ENCODE measurements at regions of chr7 and their contacts with region 1.

Region 1: DNA sequence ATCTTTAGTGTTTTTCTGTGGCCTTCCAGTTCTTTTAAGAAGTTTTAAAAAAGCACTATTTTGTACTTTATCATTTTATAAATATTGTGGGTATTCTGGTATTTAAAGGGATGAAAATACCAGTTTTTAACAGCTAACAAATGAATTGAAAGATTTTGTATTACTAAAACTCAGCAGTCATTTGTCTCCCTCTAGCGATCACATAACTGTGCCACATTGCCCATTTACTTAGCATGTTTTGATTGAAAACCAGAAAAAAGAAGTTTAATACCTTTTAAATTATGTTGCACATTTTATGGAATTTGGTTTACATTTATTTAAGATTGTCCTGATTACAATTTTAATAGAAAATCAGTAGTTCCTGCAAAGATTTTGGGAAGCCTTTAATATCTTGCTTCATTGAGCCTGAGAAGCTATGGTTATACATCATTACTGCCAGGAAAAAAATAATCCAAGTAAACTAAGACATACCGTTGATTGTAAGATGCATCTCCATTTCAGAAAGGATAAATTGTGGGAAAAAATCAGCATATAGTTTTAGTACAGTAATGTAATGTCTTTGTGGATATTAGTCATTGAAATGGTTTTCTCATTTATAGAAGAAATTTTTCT is 34.9 kb downstream of the TAX1BP1 start:
- DNase-seq: peak; percentile 59
- H3K4me3 ChIP-seq: no peak overlapping the region
- H3K27ac ChIP-seq: no peak overlapping the region
- H3K4me1 ChIP-seq: no peaks in the 10 kb centered on the region
- H3K27me3 ChIP-seq: no peaks in the 10 kb centered on the region
- CTCF ChIP-seq: peak; percentile 45 to 46
- POLR2A ChIP-seq: no peak

Region 2: GRCh38 chr7:27210441-27211083 is 564.3 kb before region 1 on chr7:
- CTCF ChIA-PET with region 1: interaction called, 24 read pairs
- POLR2A ChIA-PET with region 1: no interaction called
- dilution Hi-C with region 1: no loop called
- intact Hi-C with region 1: no loop called
- DNase-seq: no peak
- H3K4me3 ChIP-seq: peak overlapping the region in 1 of 3 experiments; percentile 29
- H3K27ac ChIP-seq: no peak overlapping the region
- H3K4me1 ChIP-seq: peaks cover 15% of the 10 kb centered on the region
- H3K27me3 ChIP-seq: peaks cover 73 to 77% of the 10 kb centered on the region in 2 experiments
- CTCF ChIP-seq: peak; percentile 56 to 82
- POLR2A ChIP-seq: no peak

Region 3: DNA sequence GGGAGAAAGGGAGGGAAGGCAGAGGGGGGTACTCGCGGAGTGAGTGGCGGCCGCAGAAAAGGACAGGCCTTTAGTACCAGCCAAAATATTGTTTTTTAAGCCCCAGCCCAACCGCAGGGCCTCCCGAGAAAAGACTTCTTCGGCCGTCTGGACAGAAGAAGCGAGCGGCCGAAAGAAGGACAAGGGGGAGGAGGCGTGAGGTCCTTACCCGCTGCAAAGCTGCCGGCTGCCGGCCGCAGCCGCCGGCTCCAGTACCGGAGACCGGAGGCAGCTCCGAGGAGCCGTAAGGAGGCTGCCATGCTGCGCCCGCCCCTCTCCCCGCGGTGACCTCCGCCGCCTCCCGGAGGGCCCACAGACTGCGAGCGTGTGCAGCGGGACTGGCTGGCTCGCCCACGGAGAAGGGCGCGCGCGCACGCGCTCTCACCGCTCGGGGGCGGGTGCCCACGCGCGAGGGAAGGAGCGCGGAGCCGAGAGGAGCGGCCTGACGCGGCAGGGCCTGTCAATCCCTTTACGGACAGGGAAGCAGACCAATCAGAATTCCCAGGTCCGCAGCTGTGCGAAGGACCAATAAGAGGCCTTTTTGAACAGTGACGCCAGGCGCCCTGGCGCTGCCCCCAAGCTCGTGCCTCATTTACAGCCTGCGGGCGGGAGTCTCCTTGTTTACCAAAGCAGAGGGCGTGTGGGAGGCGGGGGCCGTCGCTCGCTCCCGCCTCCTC is 112.2 kb before region 1 on chr7 and contains the start of gene HIBADH:
- CTCF ChIA-PET with region 1: interaction called, 11 read pairs
- POLR2A ChIA-PET with region 1: no interaction called
- dilution Hi-C with region 1: no loop called
- intact Hi-C with region 1: no loop called
- DNase-seq: peak; percentile 99
- H3K4me3 ChIP-seq: peak within 1 kb of the TSS; percentile 63 to 83 (median 69)
- H3K27ac ChIP-seq: peak within 1 kb of the TSS; percentile 74
- H3K4me1 ChIP-seq: peaks cover 7% of the 10 kb centered on the region
- H3K27me3 ChIP-seq: no peaks in the 10 kb centered on the region
- CTCF ChIP-seq: no peak
- POLR2A ChIP-seq: peak; percentile 70
- total RNA-seq, gene HIBADH: 19.7 and 22.6 TPM in 2 replicates

Region 4: DNA sequence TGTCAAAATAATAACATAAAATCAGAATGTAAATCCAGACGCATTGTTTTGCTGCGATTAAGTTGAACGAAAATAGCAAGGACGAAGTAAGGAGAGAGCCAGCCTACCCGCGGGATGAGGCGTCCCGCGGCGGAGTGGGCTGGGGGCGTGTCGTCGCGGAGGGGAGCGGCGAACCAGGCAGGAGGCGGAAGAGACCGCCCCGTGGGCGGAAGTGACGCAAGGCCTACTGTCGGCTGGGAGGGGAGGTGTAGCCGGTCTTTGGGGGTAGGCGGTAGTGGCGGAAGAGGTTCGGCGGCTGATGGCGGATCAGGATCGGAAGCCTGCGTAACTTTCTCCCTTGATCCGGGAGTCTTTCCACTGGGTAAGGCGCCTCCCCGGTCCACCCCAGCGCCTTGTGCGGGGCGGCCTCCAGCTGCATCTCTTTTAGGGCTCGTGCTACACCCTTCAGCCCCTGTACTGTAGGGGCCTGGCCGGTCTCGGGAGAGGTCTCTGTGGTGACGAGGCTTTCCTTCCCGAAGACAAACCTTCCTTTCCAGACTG is 34.8 kb before region 1 on chr7 and contains the start of gene TAX1BP1:
- CTCF ChIA-PET with region 1: interaction called, 57 read pairs
- POLR2A ChIA-PET with region 1: no interaction called
- dilution Hi-C with region 1: no loop called
- intact Hi-C with region 1: loop called (anchors 2 kb)
- DNase-seq: peak; percentile 94
- H3K4me3 ChIP-seq: peak within 1 kb of the TSS; percentile 78 to 83 (median 81)
- H3K27ac ChIP-seq: peak within 1 kb of the TSS; percentile 93
- H3K4me1 ChIP-seq: peaks cover 13% of the 10 kb centered on the region
- H3K27me3 ChIP-seq: no peaks in the 10 kb centered on the region
- CTCF ChIP-seq: no peak
- POLR2A ChIP-seq: peak; percentile 96
- total RNA-seq, gene TAX1BP1: 70.4 and 77.7 TPM in 2 replicates

Region 5: DNA sequence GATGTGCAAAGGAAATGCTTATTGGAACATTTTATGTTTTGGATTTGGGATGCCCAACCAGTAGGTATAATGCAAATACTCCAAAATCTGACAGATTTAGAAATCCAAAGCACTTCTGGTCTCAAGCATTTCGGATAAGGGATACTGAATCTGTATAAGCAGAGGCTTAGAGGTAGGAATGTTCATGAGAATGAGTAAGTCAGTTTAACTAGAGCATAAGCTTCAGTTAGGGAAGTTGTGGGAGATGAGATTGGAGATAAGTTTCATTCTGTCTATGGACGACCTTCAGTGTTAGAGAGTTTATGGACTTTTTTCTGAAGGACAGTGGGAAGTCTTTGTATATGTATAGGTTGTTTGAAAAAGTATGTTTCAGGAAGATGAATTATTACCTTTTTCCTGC is 24.5 kb before region 1 on chr7:
- CTCF ChIA-PET with region 1: interaction called, 57 read pairs
- POLR2A ChIA-PET with region 1: no interaction called
- dilution Hi-C with region 1: no loop called
- intact Hi-C with region 1: loop called (anchors 2 kb)
- DNase-seq: peak; percentile 11
- H3K4me3 ChIP-seq: no peak overlapping the region
- H3K27ac ChIP-seq: no peak overlapping the region
- H3K4me1 ChIP-seq: peaks cover 6% of the 10 kb centered on the region
- H3K27me3 ChIP-seq: no peaks in the 10 kb centered on the region
- CTCF ChIP-seq: no peak
- POLR2A ChIP-seq: no peak